Dorsolateral prefrontal cortex (tissue), 120 donors: ENCODE measurements at regions of chr7 and their contacts with region 1.

Region 1: DNA sequence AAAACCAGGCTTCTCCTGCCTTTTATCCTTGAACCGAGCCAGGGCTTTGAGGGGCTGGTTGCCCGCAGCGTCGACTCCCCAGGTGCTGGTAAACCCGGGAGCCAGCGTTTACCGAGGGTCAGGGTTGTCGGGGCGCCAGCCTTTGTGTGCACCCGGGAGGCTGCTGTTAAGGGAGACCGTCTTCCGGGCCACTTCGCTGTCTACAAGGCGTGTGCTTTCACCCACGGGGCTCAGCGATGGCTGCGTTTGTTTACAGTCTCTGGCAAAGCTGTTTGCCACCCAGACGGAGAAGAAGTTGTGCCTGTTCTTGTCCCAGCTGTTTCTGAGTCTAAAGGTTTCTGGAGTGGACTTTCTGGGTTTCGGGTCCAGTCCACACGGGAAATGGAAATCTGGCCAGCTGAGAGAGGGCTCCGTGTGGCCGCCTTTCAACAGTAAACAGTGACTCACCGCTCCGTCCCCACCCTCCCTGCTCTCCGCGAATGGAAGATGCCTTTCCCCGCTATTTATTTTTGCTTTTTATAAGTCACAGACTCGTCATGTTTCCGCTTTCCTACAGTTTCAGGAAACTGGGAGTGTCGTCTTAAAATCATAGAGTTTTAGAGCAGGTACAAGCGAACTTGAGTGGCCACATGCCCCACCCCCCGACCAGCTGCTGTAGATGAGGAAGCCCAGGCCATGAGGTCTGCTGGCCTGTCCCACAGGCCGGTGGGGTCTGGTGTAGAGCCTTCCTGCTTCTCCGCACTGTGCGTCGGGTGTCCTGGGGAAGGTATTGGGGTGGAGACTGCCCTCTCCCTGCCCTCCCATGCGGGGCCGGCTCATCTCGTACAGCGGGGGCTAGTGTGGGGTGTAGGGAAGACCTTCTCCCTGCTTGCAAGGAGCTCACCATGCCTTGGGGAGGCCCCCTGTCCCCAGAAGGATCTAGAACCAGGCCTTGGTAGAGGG is 2.3 kb downstream of the MAFK start:
- DNase-seq: peak in 5 of 10 donors; percentile 58 to 83 (median 69)
- H3K4me3 ChIP-seq: peak overlapping the region; percentile 34 to 74 (median 62)
- H3K27ac ChIP-seq: peak overlapping the region; percentile 64 to 98 (median 92)
- H3K27me3 ChIP-seq: no peaks in the 10 kb centered on the region
- CTCF ChIP-seq: peak in 1 of 56 donors; percentile 6

Region 2: DNA sequence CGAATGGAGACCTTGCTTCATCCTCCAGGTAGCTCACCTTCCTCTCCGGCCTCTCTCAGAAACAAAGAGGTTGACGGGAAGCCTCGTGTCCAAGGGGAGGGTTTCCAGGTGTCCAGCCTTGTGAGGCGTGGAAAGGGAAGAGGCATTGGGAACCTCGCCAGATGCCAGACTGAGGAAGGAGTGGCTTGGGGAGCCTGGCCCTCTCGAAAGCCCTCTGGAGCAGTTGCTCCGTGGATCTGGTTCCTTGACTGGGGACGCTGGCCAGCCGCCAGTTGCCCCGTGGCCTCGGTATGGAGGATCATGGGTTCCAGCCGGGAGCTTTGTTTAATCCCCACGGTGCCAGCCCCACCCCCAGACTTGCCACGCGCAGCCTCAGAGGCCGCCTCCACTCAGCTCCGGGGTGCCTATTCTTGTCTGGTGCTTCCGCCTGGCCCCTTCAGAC is 730.8 kb before region 1 on chr7:
- intact Hi-C with region 1: no loop called
- DNase-seq: peak in 2 of 10 donors; percentile 26 to 54
- H3K4me3 ChIP-seq: peak overlapping the region in 53 of 59 donors; percentile 3 to 59 (median 35)
- H3K27ac ChIP-seq: peak overlapping the region in 10 of 59 donors; percentile 19 to 58 (median 44)
- H3K27me3 ChIP-seq: no peaks in the 10 kb centered on the region
- CTCF ChIP-seq: no peak

Region 3: DNA sequence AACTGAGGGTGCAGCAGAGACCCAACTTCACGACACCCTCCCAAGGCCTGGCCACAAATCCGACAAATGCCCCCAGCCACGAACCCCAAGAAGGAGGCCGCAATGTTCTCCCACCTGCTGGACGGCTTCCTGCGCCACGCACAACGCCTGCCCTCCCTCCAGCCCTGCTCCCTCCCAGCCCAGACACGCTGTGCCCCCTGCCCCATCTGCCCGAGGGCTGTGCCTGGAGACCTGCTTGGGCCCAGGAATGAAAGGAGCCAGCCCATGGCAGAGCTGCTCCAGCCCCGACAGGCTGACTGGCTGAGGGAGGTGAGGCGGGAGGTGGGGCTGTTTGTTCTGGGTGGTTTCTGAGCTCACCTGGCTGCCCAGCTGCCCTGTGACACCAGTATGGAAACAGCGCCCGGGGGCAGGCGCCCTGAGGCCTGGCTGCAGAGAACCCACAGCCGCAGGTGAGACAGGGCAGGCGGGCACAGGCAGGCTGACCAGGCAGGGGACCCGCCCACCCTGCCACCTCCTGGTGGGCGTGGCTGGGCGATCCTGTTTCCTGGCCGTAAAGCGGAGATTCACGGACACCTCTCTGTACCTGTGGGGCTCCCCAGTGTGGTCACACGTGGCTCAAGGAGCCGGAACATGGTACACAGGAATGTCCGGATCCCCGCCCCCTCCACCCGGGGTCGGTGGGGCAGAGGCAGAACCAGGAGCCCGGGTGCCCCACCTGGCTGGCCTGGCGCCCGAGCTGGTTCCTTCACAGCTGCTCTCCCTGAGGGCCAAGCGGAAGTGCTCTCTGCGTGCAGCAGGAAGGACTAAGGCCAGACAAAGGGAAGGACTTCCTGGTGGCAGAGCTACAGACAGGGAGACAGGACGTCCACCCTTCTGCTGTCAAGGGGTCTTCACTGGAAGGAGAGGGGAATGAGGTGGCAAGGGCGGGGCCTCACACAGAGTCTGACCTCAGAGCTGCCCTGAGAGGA is 77.5 kb before region 1 on chr7:
- intact Hi-C with region 1: no loop called
- DNase-seq: no peak
- H3K4me3 ChIP-seq: peak overlapping the region in 23 of 59 donors; percentile 5 to 49 (median 24)
- H3K27ac ChIP-seq: peak overlapping the region in 52 of 59 donors; percentile 18 to 96 (median 66)
- H3K27me3 ChIP-seq: no peaks in the 10 kb centered on the region
- CTCF ChIP-seq: no peak

Region 4: GRCh38 chr7:1466524-1467271 is 66.1 kb before region 1 on chr7:
- intact Hi-C with region 1: no loop called
- DNase-seq: peak in 2 of 10 donors; percentile 43 to 56
- H3K4me3 ChIP-seq: no peak overlapping the region
- H3K27ac ChIP-seq: peak overlapping the region in 36 of 59 donors; percentile 5 to 78 (median 61)
- H3K27me3 ChIP-seq: no peaks in the 10 kb centered on the region
- CTCF ChIP-seq: peak in 1 of 56 donors; percentile 20

Region 5: DNA sequence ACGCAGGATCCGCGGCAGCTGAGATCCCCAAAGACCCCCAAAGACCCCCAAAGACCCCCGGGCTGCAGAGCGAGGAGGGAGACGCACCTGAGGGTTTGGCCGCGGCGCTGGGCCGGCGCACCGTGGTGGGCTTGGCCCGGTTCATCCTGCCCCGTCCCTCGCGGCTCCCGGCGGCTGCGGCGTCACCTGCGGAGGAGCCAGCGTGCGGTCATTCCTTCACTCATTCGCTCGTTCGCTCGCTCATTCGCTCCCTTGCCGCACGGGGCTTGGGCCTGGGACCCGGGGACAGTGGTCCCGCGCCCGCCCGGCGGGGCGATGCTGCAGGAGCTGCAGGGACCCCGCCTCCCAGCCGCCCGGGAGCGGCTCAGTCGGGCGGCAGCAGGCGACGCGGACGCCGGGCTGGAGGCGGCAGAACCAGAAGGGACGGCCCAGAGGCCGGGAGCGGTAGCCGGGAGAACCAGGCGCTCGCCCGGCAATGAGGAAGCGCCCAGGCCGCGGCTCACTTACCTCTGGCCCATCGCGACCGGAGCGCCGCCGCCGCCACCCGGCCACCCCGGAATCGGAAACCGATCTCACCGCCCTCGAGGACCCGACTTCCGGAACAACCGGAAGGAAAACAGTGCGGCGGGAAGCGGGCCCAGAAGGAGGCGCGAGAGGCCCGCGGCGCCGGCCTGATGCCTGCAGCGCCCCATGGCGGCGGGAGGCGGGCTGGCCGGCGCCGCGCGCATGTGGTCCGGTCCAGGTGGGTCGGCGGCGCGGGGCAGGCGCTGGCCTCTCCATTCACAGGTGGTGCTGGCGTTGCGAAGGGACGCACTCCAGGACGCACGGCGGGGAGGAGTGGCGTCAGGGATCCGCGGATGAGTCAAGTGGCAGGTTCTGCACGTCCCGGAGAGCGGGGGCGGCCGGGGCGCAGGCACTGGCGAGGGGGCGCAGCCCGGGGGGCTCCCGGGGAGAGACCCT is 28.7 kb before region 1 on chr7 and contains the start of gene INTS1:
- intact Hi-C with region 1: loop called in 1 of 2 experiments (anchors 2 kb)
- DNase-seq: peak; percentile 81 to 95 (median 92)
- H3K4me3 ChIP-seq: peak within 1 kb of the TSS; percentile 66 to 100 (median 99)
- H3K27ac ChIP-seq: peak within 1 kb of the TSS in 42 of 59 donors; percentile 3 to 83 (median 62)
- H3K27me3 ChIP-seq: no peaks in the 10 kb centered on the region
- CTCF ChIP-seq: peak; percentile 57 to 99 (median 92)
- total RNA-seq, gene INTS1: 86.1 to 155 (median 115) TPM

Region 6: DNA sequence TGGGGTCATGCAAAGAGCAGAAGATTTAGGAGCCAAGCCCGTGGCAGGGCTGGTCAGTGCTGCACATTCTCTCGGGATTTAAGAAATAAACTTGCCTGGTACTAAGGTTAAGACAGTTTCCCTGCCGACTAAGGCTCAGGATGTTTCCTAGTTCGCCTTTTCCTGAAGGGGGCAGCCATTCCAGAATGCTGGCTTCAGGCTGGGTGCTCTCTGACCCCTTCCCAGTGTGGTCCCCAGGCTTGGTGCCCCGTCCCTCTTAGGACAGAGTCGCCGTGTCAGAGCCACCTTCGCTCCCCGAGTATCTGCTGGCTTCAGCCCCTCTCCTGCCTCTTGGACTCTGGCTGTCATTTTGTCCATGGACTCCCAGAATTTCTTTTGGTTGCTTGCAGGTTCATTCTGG is 254.5 kb after region 1 on chr7:
- intact Hi-C with region 1: no loop called
- DNase-seq: peak in 1 of 10 donors; percentile 6
- H3K4me3 ChIP-seq: no peak overlapping the region
- H3K27ac ChIP-seq: no peak overlapping the region
- H3K27me3 ChIP-seq: peaks cover 0 to 12% (median 0%) of the 10 kb centered on the region in 45 donors
- CTCF ChIP-seq: no peak